ENCODE measurements at regions of chr11 and their contacts with region 1.

Region 1: GRCh38 chr11:123261345-123262106 is 66.5 kb upstream of the CLMP start:
- DNase-seq: peak; percentile 95
- H3K4me3 ChIP-seq: no peak overlapping the region
- H3K27ac ChIP-seq: no peak overlapping the region
- H3K4me1 ChIP-seq: peaks cover 17% of the 10 kb centered on the region
- H3K27me3 ChIP-seq: no peaks in the 10 kb centered on the region
- CTCF ChIP-seq: peak; percentile 99

Region 2: DNA sequence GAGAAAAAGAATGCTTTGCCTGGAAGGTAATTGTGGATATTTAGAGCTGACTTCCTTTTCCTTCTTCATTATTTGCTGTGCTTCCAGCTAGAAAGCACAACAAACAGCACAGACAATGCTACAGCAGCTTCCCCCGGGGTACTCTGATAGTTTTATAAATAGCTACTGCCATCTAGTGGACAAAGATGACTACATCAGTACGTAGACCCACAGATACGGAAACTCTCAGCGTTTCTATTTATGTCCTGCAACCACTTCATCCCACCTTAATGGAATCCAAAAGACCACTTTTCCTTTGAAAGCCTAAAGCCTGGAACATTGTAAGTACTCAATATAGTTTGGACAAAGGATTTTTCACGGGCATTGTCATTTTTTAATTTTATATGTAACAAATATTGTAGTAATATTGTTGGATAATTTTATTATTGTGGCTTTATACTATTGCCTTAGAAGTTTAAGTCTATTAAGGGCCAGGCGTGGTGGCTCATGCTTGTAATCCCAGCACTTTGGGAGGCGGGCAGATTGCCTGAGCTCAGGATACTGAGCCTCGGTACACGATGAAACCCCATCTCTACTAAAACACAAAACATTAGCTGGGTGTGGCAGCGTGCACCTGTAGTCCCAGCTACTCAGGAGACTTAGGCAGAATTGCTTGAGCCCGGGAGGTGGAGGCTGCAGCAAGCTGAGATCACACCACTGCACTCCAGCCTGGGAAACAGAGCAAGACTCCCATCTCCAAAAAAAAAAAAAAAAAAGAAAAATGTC is 207.0 kb before region 1 on chr11:
- CTCF ChIA-PET with region 1: interaction called, 11 read pairs
- POLR2A ChIA-PET with region 1: interaction called, 8 read pairs
- intact Hi-C with region 1: no loop called
- DNase-seq: peak; percentile 94
- H3K4me3 ChIP-seq: no peak overlapping the region
- H3K27ac ChIP-seq: no peak overlapping the region
- H3K4me1 ChIP-seq: peaks cover 28% of the 10 kb centered on the region
- H3K27me3 ChIP-seq: no peaks in the 10 kb centered on the region
- CTCF ChIP-seq: peak; percentile 87

Region 3: DNA sequence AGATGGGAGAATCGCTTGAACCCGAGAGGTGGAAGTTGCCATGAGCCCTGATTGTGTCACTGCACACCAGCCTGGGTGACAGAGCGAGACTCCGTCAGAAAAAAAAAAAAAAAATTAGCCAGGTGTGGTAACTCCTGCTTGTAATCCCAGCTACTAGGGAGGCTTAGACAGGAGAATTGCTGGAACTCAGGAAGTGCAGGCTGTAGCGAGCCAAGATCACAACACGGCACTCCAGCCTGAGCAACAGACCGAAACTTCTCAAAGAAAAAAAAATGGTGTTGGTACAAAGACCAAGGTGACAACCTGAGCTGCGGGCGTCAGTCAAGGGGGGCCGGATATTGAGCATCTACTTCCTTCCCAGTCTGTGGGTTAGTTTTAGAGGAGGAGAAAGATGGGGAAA is 151.2 kb before region 1 on chr11:
- CTCF ChIA-PET with region 1: interaction called, 40 read pairs
- POLR2A ChIA-PET with region 1: no interaction called
- intact Hi-C with region 1: no loop called
- DNase-seq: no peak
- H3K4me3 ChIP-seq: no peak overlapping the region
- H3K27ac ChIP-seq: no peak overlapping the region
- H3K4me1 ChIP-seq: peaks cover 21% of the 10 kb centered on the region
- H3K27me3 ChIP-seq: no peaks in the 10 kb centered on the region
- CTCF ChIP-seq: no peak

Region 4: GRCh38 chr11:123129920-123130319 is 131.6 kb before region 1 on chr11:
- CTCF ChIA-PET with region 1: interaction called, 10 read pairs
- POLR2A ChIA-PET with region 1: no interaction called
- intact Hi-C with region 1: no loop called
- DNase-seq: peak; percentile 37
- H3K4me3 ChIP-seq: no peak overlapping the region
- H3K27ac ChIP-seq: peak overlapping the region; percentile 2
- H3K4me1 ChIP-seq: peaks cover 27% of the 10 kb centered on the region
- H3K27me3 ChIP-seq: no peaks in the 10 kb centered on the region
- CTCF ChIP-seq: no peak

Region 5: DNA sequence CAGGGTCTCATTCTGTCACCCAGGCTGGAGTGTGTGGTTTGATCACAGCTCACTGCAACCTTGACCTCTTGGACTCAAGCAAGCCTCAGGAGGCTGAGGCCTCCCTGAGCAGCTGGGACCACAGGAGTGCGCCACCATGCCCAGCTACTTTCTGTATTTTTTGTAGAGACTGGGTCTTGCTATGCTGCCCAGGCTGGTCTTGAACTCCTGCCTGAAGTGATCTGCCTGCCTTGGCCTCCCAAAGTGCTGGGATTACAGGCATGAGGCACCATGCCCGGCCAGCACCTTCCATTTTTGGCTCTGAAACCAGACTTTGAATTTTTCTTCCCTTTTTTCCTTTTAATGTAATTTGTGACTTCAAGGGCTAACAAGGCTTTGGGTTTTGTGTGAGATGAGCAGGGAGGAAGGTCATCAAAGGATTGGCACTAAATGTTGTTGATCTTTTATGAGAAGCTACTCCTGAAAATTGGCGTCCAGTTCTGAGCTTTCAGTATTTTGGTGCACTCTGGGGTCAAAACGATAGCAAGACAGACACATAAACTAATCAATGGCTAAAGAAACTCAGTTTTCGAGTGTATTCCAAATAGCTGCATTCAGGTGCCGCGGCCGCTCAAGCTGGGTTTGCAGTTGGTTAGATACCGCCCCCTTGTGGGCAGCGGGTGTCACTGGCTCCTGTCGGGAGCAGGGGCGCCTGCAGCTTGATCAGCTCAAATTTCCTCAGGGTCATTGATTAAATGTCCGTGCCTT is 14.6 kb before region 1 on chr11:
- CTCF ChIA-PET with region 1: interaction called, 19 read pairs
- POLR2A ChIA-PET with region 1: no interaction called
- intact Hi-C with region 1: no loop called
- DNase-seq: peak; percentile 93
- H3K4me3 ChIP-seq: no peak overlapping the region
- H3K27ac ChIP-seq: no peak overlapping the region
- H3K4me1 ChIP-seq: peaks cover 45% of the 10 kb centered on the region
- H3K27me3 ChIP-seq: no peaks in the 10 kb centered on the region
- CTCF ChIP-seq: peak; percentile 100

Region 6: DNA sequence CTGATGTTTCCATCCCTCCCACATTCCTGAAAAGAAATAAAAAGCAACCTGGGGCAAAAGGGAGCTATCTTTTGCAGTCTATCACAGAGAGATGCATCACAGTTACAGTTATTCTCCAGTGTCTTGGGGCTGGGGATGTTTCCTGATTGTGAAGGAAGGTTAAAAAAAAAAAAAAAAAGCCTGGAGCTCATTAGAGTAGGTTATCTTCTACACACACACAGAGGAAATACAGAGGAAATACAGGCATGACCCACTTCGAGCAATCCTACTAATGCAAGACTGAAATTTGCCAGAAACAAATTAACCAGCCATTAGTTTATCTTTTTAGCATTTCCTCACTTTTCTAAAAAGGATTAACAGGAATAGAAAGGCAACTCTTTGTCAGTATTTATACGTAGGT is 22.9 kb after region 1 on chr11:
- CTCF ChIA-PET with region 1: interaction called, 13 read pairs
- POLR2A ChIA-PET with region 1: no interaction called
- intact Hi-C with region 1: no loop called
- DNase-seq: peak; percentile 77
- H3K4me3 ChIP-seq: no peak overlapping the region
- H3K27ac ChIP-seq: peak overlapping the region; percentile 72
- H3K4me1 ChIP-seq: peaks cover 37% of the 10 kb centered on the region
- H3K27me3 ChIP-seq: no peaks in the 10 kb centered on the region
- CTCF ChIP-seq: no peak

Region 7: DNA sequence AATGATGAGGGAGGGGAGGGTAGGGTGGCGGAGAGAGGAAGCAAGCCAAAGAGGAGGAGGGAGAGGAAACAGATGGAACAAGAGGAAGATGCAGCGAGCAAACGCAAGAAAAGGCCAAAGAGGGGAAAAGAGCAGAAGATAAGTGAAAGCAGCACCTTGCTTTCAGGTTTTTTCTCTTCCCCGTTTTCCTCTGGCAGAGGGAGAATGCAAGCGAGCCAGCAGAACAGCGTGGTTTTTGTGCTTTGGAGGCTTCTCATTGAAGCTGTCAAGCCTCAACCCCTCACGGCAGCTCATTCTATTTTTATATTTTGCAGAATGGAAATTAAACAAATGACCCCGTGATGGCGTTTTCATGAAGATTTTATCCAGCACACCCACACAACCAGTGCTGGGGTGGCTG is 101.4 kb after region 1 on chr11:
- CTCF ChIA-PET with region 1: no interaction called
- POLR2A ChIA-PET with region 1: no interaction called
- intact Hi-C with region 1: no loop called
- DNase-seq: no peak
- H3K4me3 ChIP-seq: no peak overlapping the region
- H3K27ac ChIP-seq: peak overlapping the region; percentile 4
- H3K4me1 ChIP-seq: peaks cover 18% of the 10 kb centered on the region
- H3K27me3 ChIP-seq: peaks cover 7% of the 10 kb centered on the region
- CTCF ChIP-seq: no peak

Measured in A673 (cell line).